Tibial artery (tissue), 4 donors: ENCODE measurements at regions of chr16 and their contacts with region 1.

Region 1: DNA sequence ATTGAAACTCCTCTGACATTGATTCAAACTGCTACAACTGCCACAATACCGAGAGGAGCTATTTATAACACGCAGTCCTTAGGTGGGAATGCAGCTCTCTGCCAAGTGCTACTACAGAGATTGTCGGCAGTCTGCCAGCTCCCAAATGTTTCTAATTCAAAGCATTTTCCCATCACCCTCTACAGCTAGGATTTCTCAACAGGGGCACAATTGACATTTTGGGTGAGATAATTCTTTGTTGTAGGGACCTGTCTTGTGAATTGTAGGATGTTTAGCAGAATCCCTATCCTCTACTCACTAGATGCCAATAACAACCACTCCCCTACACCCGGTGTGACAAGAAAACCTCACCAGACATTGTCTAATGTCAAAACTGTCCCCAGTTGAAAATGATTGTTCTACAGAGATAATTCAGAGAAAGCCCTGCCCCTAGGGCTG is 7.8 kb upstream of the N4BP1 start:
- DNase-seq: no peak
- H3K4me3 ChIP-seq: no peak overlapping the region
- H3K27ac ChIP-seq: no peak overlapping the region
- H3K4me1 ChIP-seq: peaks cover 0 to 22% (median 14%) of the 10 kb centered on the region in 4 donors
- H3K27me3 ChIP-seq: no peaks in the 10 kb centered on the region
- CTCF ChIP-seq: no peak

Region 2: GRCh38 chr16:48256579-48257177 is 361.1 kb before region 1 on chr16:
- intact Hi-C with region 1: loop called (anchors 5 kb)
- DNase-seq: no peak
- H3K4me3 ChIP-seq: no peak overlapping the region
- H3K27ac ChIP-seq: no peak overlapping the region
- H3K4me1 ChIP-seq: no peaks in the 10 kb centered on the region
- H3K27me3 ChIP-seq: no peaks in the 10 kb centered on the region
- CTCF ChIP-seq: no peak